ENCODE measurements at regions of chr19 and their contacts with region 1.

Region 1: GRCh38 chr19:7680606-7681339 is at the start of gene TRAPPC5:
- DNase-seq: peak; percentile 75 to 92 (median 87)
- ATAC-seq: peak; percentile 61
- H3K4me3 ChIP-seq: peak within 1 kb of the TSS; percentile 92 to 99
- H3K4me3 Mint-ChIP-seq: peak within 1 kb of the TSS; percentile 91
- H3K27ac ChIP-seq: peak within 1 kb of the TSS; percentile 65 to 66
- H3K27ac Mint-ChIP-seq: peak within 1 kb of the TSS; percentile 92
- H3K4me1 ChIP-seq: peaks cover 33% of the 10 kb centered on the region
- H3K4me1 Mint-ChIP-seq: peaks cover 48% of the 10 kb centered on the region
- H3K27me3 ChIP-seq: peaks cover 0 to 7% of the 10 kb centered on the region in 2 experiments
- H3K27me3 Mint-ChIP-seq: peaks cover 12% of the 10 kb centered on the region
- CTCF ChIP-seq: peak; percentile 89
- total RNA-seq, gene TRAPPC5: 32.4 to 39.5 TPM

Region 2: GRCh38 chr19:7562646-7563393 is 118.0 kb before region 1 on chr19:
- CTCF ChIA-PET with region 1: interaction called, 14 read pairs
- POLR2A ChIA-PET with region 1: no interaction called
- intact Hi-C with region 1: loop called in 1 of 2 experiments (anchors 1 kb)
- DNase-seq: peak in 1 of 9 experiments; percentile 23
- ATAC-seq: no peak
- H3K4me3 ChIP-seq: no peak overlapping the region
- H3K4me3 Mint-ChIP-seq: no peak overlapping the region
- H3K27ac ChIP-seq: no peak overlapping the region
- H3K27ac Mint-ChIP-seq: no peak overlapping the region
- H3K4me1 ChIP-seq: no peaks in the 10 kb centered on the region
- H3K4me1 Mint-ChIP-seq: no peaks in the 10 kb centered on the region
- H3K27me3 ChIP-seq: no peaks in the 10 kb centered on the region
- H3K27me3 Mint-ChIP-seq: no peaks in the 10 kb centered on the region
- CTCF ChIP-seq: no peak

Region 3: GRCh38 chr19:7670150-7670783 is 10.5 kb before region 1 on chr19:
- CTCF ChIA-PET with region 1: interaction called, 14 read pairs
- POLR2A ChIA-PET with region 1: no interaction called
- intact Hi-C with region 1: no loop called
- DNase-seq: peak in 4 of 9 experiments; percentile 26 to 54 (median 42)
- ATAC-seq: peak; percentile 60
- H3K4me3 ChIP-seq: peak overlapping the region; percentile 12 to 30
- H3K4me3 Mint-ChIP-seq: peak overlapping the region; percentile 76
- H3K27ac ChIP-seq: no peak overlapping the region
- H3K27ac Mint-ChIP-seq: peak overlapping the region; percentile 60
- H3K4me1 ChIP-seq: peaks cover 16% of the 10 kb centered on the region
- H3K4me1 Mint-ChIP-seq: peaks cover 20% of the 10 kb centered on the region
- H3K27me3 ChIP-seq: peaks cover 0 to 3% of the 10 kb centered on the region in 2 experiments
- H3K27me3 Mint-ChIP-seq: peaks cover 30% of the 10 kb centered on the region
- CTCF ChIP-seq: no peak

Region 4: GRCh38 chr19:7799640-7800355 is 119.0 kb after region 1 on chr19:
- CTCF ChIA-PET with region 1: interaction called, 73 read pairs
- POLR2A ChIA-PET with region 1: interaction called, 4 read pairs
- intact Hi-C with region 1: loop called in 1 of 2 experiments (anchors 1 kb)
- DNase-seq: peak in 8 of 9 experiments; percentile 15 to 77 (median 66)
- ATAC-seq: no peak
- H3K4me3 ChIP-seq: no peak overlapping the region
- H3K4me3 Mint-ChIP-seq: no peak overlapping the region
- H3K27ac ChIP-seq: no peak overlapping the region
- H3K27ac Mint-ChIP-seq: no peak overlapping the region
- H3K4me1 ChIP-seq: no peaks in the 10 kb centered on the region
- H3K4me1 Mint-ChIP-seq: peaks cover 4% of the 10 kb centered on the region
- H3K27me3 ChIP-seq: peaks cover 0 to 4% of the 10 kb centered on the region in 2 experiments
- H3K27me3 Mint-ChIP-seq: peaks cover 11% of the 10 kb centered on the region
- CTCF ChIP-seq: peak; percentile 69

Region 5: DNA sequence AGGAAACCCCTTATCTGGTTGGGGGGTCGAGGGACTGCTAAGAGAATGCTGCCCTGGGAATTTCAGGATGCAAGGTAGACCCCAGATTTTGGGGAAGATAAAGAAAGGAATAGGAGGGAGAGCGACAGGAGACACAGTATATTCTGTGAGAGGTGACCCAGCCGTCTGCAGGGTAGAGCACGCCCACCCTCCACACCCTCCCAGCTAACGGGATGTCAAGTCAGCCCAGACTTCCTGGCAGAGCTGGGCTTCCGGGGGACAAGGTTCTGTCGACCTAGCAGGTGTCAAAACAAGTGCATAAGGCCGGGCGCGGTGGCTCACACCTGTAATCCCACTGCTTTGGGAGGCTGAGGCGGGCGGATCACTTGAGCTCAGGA is 194.1 kb after region 1 on chr19:
- CTCF ChIA-PET with region 1: no interaction called
- POLR2A ChIA-PET with region 1: no interaction called
- intact Hi-C with region 1: no loop called
- DNase-seq: no peak
- ATAC-seq: no peak
- H3K4me3 ChIP-seq: peak overlapping the region in 1 of 2 experiments; percentile 57
- H3K4me3 Mint-ChIP-seq: peak overlapping the region; percentile 61
- H3K27ac ChIP-seq: no peak overlapping the region
- H3K27ac Mint-ChIP-seq: no peak overlapping the region
- H3K4me1 ChIP-seq: peaks cover 45% of the 10 kb centered on the region
- H3K4me1 Mint-ChIP-seq: peaks cover 30% of the 10 kb centered on the region
- H3K27me3 ChIP-seq: peaks cover 4 to 18% of the 10 kb centered on the region in 2 experiments
- H3K27me3 Mint-ChIP-seq: peaks cover 18% of the 10 kb centered on the region
- CTCF ChIP-seq: no peak

Region 6: DNA sequence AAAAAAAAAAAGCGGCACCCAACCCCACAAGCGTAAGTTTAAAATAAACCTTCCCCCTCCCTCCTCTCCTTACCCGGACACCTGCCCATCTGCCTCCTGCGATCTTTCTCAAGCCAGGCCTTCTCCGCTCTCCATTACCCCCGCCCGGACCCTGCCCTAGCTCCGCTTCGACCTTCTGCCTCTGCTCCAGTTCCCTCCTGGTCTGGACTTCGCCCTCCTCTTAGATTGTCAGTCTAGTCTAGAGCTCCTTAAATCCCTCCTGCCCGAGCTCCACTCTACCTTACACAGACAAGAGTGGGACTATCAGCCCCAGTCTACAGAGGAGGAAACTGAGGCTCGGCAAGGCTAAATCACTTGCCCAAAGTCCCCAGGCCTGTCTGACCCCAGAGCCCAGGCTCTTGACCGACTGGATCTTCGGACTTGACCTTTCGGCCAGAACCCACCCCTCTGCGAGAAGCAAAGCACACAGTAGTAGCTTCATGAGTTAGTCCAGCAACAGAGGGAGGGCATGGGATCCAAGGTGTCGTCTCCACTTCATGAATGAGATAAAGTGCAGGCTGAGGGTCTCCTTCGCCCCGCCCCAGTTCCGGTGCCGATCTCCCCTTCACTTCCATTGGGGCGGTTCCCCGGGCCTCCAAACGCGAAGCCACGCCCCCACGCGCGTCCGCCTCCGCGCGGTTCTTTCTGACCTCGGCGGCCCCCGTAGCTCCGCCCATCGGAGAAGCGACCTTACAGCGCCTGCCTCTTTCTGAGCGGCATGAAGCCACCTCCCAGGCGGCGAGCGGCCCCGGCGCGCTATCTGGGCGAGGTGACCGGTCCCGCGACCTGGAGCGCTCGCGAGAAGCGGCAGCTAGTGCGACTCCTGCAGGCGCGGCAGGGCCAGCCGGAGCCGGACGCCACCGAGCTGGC is 239.1 kb after region 1 on chr19 and contains the start of gene SNAPC2:
- CTCF ChIA-PET with region 1: interaction called, 3 read pairs
- POLR2A ChIA-PET with region 1: interaction called, 3 read pairs
- intact Hi-C with region 1: loop called (anchors 1 to 2 kb)
- DNase-seq: peak; percentile 93 to 98 (median 96)
- ATAC-seq: peak; percentile 63
- H3K4me3 ChIP-seq: peak within 1 kb of the TSS; percentile 51 to 87
- H3K4me3 Mint-ChIP-seq: peak within 1 kb of the TSS; percentile 88
- H3K27ac ChIP-seq: peak within 1 kb of the TSS; percentile 55 to 65
- H3K27ac Mint-ChIP-seq: peak within 1 kb of the TSS; percentile 90
- H3K4me1 ChIP-seq: peaks cover 42% of the 10 kb centered on the region
- H3K4me1 Mint-ChIP-seq: peaks cover 48% of the 10 kb centered on the region
- H3K27me3 ChIP-seq: peaks cover 21 to 27% of the 10 kb centered on the region in 2 experiments
- H3K27me3 Mint-ChIP-seq: peaks cover 25% of the 10 kb centered on the region
- CTCF ChIP-seq: no peak
- total RNA-seq, gene SNAPC2: 15.4 to 17.0 TPM

Region 7: GRCh38 chr19:7933411-7933810 is 252.6 kb after region 1 on chr19:
- CTCF ChIA-PET with region 1: no interaction called
- POLR2A ChIA-PET with region 1: no interaction called
- intact Hi-C with region 1: no loop called
- DNase-seq: peak in 2 of 9 experiments; percentile 20 to 24
- ATAC-seq: no peak
- H3K4me3 ChIP-seq: no peak overlapping the region
- H3K4me3 Mint-ChIP-seq: no peak overlapping the region
- H3K27ac ChIP-seq: no peak overlapping the region
- H3K27ac Mint-ChIP-seq: no peak overlapping the region
- H3K4me1 ChIP-seq: no peaks in the 10 kb centered on the region
- H3K4me1 Mint-ChIP-seq: peaks cover 7% of the 10 kb centered on the region
- H3K27me3 ChIP-seq: no peaks in the 10 kb centered on the region
- H3K27me3 Mint-ChIP-seq: no peaks in the 10 kb centered on the region
- CTCF ChIP-seq: no peak

Measured in CD8-positive, alpha-beta T cell (primary cell).